MCF 10A (cell line): ENCODE measurements at regions of chr9 and their contacts with region 1.

Region 1: GRCh38 chr9:76810377-76810957 is 46.2 kb downstream of the PCA3 start:
- DNase-seq: peak; percentile 72
- H3K4me3 Mint-ChIP-seq: no peak overlapping the region
- H3K27ac Mint-ChIP-seq: no peak overlapping the region
- H3K4me1 Mint-ChIP-seq: no peaks in the 10 kb centered on the region
- H3K27me3 Mint-ChIP-seq: peaks cover 14% of the 10 kb centered on the region
- CTCF ChIP-seq: peak; percentile 81

Region 2: GRCh38 chr9:75410405-75410804 is 1400.1 kb before region 1 on chr9:
- CTCF ChIA-PET with region 1: no interaction called
- POLR2A ChIA-PET with region 1: no interaction called
- intact Hi-C with region 1: no loop called
- DNase-seq: no peak
- H3K4me3 Mint-ChIP-seq: no peak overlapping the region
- H3K27ac Mint-ChIP-seq: no peak overlapping the region
- H3K4me1 Mint-ChIP-seq: no peaks in the 10 kb centered on the region
- H3K27me3 Mint-ChIP-seq: no peaks in the 10 kb centered on the region
- CTCF ChIP-seq: no peak

Region 3: DNA sequence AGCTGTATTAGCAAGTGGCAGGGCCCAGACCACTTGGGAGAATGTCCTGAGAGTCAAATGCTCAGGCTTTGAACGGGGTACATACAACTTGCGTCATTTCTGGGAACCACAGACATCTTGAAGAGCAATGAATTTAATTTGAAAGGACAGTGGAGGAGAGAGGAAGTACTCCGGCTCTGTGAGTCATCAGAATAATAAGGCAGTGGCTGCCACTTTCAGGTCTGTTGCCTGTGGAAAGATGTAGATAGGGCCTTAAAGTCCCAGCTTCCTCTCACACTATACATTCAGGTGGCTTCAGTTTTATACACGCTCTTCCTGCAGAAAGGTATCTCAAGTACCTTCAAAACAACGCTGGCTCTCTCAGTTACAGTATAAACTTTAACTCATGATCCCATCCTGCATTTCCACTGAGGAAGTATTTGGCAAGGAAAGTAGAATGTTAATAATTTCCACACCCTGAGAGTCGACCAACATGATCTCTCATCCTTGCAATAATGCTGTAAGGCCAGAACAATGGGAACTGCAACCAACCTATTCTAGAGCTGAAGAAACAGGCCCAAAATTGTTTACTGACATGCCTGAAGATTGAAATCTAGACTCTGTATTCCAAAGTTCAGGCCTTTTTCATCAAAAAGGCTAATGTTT is 102.3 kb after region 1 on chr9:
- CTCF ChIA-PET with region 1: interaction called, 26 read pairs
- POLR2A ChIA-PET with region 1: no interaction called
- intact Hi-C with region 1: no loop called
- DNase-seq: peak; percentile 73
- H3K4me3 Mint-ChIP-seq: no peak overlapping the region
- H3K27ac Mint-ChIP-seq: peak overlapping the region; percentile 6
- H3K4me1 Mint-ChIP-seq: peaks cover 7% of the 10 kb centered on the region
- H3K27me3 Mint-ChIP-seq: peaks cover 37% of the 10 kb centered on the region
- CTCF ChIP-seq: no peak

Region 4: GRCh38 chr9:76987594-76988200 is 177.2 kb after region 1 on chr9:
- CTCF ChIA-PET with region 1: interaction called, 52 read pairs
- POLR2A ChIA-PET with region 1: interaction called, 3 read pairs
- intact Hi-C with region 1: loop called (anchors 1 kb)
- DNase-seq: peak; percentile 68
- H3K4me3 Mint-ChIP-seq: no peak overlapping the region
- H3K27ac Mint-ChIP-seq: no peak overlapping the region
- H3K4me1 Mint-ChIP-seq: no peaks in the 10 kb centered on the region
- H3K27me3 Mint-ChIP-seq: peaks cover 33% of the 10 kb centered on the region
- CTCF ChIP-seq: peak; percentile 58

Region 5: DNA sequence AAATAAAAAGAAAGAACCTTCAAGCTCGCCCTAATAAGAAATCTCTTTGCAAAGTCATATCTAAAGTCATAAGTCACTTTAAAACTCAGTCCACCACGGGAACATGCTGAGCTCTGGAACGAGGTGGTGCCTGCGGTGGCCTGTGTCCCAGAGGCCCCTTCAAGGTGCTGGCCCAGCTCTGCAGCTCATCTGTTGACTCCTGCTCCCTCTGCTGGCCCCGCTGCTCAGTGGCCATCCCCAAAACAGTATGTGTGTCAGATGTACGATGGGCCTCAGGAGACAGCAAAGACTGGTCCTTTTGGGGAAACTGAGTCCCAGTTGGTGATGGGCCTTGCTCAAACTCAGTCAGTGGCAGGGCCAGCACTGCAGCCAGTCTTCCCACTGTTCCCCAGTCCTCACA is 186.2 kb after region 1 on chr9:
- CTCF ChIA-PET with region 1: interaction called, 19 read pairs
- POLR2A ChIA-PET with region 1: no interaction called
- intact Hi-C with region 1: no loop called
- DNase-seq: peak; percentile 48
- H3K4me3 Mint-ChIP-seq: no peak overlapping the region
- H3K27ac Mint-ChIP-seq: no peak overlapping the region
- H3K4me1 Mint-ChIP-seq: no peaks in the 10 kb centered on the region
- H3K27me3 Mint-ChIP-seq: no peaks in the 10 kb centered on the region
- CTCF ChIP-seq: peak; percentile 28

Region 6: DNA sequence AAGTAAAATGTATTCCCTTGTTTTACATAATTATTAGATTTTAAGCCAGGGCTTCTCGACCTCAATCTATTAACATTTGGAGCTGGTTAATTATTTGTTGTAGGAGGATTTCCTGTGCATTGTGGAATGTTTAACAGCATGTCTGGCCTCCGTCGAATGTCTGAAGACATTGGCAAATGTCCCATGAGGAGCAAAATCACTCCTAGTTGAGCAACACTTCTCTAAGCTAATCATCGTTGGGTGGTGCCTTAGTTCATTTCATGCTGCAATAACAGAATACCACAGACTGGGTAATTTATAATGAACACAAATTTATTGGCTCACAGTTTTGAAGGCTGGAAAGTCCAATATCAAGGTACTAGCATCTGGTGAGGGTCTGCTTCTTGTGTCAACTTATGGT is 353.4 kb after region 1 on chr9:
- CTCF ChIA-PET with region 1: interaction called, 100 read pairs
- POLR2A ChIA-PET with region 1: interaction called, 17 read pairs
- intact Hi-C with region 1: loop called (anchors 1 kb)
- DNase-seq: peak; percentile 81
- H3K4me3 Mint-ChIP-seq: peak overlapping the region; percentile 46
- H3K27ac Mint-ChIP-seq: peak overlapping the region; percentile 84
- H3K4me1 Mint-ChIP-seq: peaks cover 39% of the 10 kb centered on the region
- H3K27me3 Mint-ChIP-seq: no peaks in the 10 kb centered on the region
- CTCF ChIP-seq: no peak